Vagina (tissue), 2 donors: ENCODE measurements at regions of chr15 and their contacts with region 1.

Region 1: DNA sequence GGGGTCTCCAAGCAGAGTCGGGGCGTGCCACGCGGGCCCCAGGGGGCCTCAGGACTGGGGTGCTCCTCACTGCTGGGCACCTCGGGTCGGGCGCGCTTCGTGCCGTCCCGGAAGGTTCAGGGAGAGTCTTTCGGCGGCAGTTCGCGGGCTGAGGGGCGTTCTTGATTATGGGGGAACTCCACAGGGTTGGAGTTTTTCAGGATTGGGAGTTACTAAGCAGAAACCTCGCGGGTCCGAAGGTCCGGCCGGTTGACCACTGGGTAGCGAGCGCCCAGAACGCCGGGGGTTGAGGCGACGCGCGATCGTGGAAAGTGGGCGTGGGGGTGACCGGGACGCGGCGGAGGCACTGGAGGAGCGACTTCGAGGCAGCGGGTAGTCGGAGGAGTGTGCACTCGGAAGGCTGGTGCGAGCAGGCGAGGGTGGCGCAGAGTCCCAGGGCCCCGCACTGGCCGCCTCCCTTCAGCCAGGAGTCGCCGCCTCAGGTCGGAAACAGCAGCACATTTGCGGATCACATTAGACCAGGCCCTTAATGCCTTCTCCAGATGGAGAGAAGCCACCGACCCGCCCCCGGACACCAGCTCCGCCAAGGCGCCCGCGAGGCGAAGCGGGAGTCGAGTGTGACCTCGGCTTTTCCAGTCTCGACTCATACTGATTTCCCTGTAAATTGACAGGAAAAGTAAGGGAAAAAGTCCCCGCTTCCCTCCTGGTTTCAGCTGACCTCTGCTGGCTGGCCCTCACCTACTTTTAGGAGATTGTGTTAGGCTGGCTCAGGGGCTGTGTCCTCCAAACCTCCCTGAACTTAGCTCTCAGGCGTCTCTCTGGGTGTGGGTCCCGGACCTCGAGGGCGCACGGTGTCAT is 685 bp downstream of the ADAMTSL3 start:
- DNase-seq: no peak
- H3K4me3 ChIP-seq: peak overlapping the region; percentile 44 to 58
- H3K27ac ChIP-seq: no peak overlapping the region
- H3K4me1 ChIP-seq: peaks cover 22% of the 10 kb centered on the region
- H3K27me3 ChIP-seq: no peaks in the 10 kb centered on the region
- CTCF ChIP-seq: no peak
- POLR2A ChIP-seq: no peak

Region 2: GRCh38 chr15:83605111-83605945 is 49.3 kb before region 1 on chr15:
- intact Hi-C with region 1: loop called (anchors 5 kb)
- DNase-seq: no peak
- H3K4me3 ChIP-seq: no peak overlapping the region
- H3K27ac ChIP-seq: no peak overlapping the region
- H3K4me1 ChIP-seq: peaks cover 6% of the 10 kb centered on the region
- H3K27me3 ChIP-seq: no peaks in the 10 kb centered on the region
- CTCF ChIP-seq: no peak
- POLR2A ChIP-seq: no peak